Esophagus muscularis mucosa (tissue), 4 donors: ENCODE measurements at regions of chr3 and their contacts with region 1.

Region 1: DNA sequence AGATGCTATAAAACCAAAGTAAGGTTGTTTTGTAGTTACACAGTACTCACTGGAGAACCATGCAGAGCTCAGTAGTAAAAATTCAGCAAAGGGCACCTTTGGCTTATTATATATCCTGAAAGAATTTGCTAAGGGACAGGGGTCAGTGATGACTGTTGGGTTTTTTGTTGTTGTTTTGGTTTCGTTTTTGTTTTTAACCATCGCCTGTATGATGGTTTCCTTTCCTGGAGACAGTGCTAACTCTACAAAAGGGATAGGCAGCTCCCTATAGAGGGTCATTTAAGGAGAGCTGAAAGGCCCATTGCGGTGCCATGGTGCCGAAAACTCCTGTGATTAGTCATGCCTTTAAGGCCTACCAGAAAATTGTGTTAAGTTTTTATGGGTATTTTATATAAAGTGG is 118.2 kb upstream of the GOLIM4 start:
- DNase-seq: no peak
- H3K4me3 ChIP-seq: no peak overlapping the region
- H3K27ac ChIP-seq: no peak overlapping the region
- H3K4me1 ChIP-seq: peaks cover 0 to 7% (median 0%) of the 10 kb centered on the region in 4 donors
- H3K27me3 ChIP-seq: no peaks in the 10 kb centered on the region
- CTCF ChIP-seq: no peak
- EP300 ChIP-seq: no peak
- POLR2A ChIP-seq: no peak

Region 2: DNA sequence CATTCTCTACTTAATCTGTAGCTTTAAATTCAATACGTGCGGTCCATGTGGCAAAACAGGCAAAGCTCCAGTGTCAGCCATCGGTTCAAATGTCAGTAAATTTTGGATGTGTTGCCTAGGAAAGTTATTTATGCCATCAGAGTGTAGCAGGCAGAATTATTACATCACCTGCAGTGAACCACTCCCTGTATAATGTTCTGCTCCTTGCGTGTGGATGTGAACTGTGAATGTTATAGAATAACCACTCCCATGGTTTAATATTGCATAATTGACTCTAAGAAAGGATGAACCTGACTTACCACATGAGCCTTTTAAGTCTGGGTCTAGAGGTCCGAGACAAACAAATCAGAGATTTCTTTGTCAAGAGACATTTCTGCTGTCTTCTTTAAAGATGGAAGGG is 263.7 kb before region 1 on chr3:
- intact Hi-C with region 1: no loop called
- DNase-seq: no peak
- H3K4me3 ChIP-seq: no peak overlapping the region
- H3K27ac ChIP-seq: no peak overlapping the region
- H3K4me1 ChIP-seq: no peaks in the 10 kb centered on the region
- H3K27me3 ChIP-seq: no peaks in the 10 kb centered on the region
- CTCF ChIP-seq: no peak
- EP300 ChIP-seq: no peak
- POLR2A ChIP-seq: no peak

Region 3: DNA sequence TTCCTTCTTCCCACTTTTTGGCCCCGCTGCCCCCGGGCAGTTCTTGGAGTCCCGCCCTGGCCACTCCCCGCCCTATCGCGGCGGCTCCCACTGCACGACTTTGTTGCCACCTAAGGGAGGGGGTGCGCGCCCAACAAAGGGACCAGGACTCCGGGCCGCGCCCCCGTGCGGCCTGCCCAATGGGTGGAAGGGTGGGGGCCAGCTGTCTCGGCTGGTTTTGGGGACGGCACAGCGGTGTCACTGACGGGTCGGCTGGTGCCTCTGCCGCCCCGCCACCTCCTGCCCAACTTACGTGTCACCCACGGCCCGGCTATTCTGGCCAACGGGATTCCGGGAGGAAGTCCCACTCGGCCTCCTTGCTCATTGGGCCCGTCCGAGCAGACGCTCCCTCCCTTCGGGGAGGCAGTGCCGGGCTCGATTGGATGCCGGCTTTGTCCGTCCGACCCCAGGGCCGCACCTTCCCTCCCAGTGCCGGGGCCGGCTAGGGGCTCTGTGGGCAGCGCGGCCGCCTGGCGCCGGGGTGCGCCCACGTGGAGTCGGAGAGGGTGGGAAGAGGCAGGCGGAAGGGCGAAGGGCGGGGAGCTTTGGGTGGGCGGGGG is 118.2 kb before region 1 on chr3 and contains the start of gene GOLIM4:
- intact Hi-C with region 1: no loop called
- DNase-seq: peak; percentile 96
- H3K4me3 ChIP-seq: peak within 1 kb of the TSS; percentile 66 to 93 (median 91)
- H3K27ac ChIP-seq: peak within 1 kb of the TSS; percentile 92 to 98 (median 98)
- H3K4me1 ChIP-seq: peaks cover 38 to 48% (median 45%) of the 10 kb centered on the region in 4 donors
- H3K27me3 ChIP-seq: no peaks in the 10 kb centered on the region
- CTCF ChIP-seq: no peak
- EP300 ChIP-seq: no peak
- POLR2A ChIP-seq: peak; percentile 74
- total RNA-seq, gene GOLIM4: 41.7 to 46.5 (median 45.0) TPM

Region 4: DNA sequence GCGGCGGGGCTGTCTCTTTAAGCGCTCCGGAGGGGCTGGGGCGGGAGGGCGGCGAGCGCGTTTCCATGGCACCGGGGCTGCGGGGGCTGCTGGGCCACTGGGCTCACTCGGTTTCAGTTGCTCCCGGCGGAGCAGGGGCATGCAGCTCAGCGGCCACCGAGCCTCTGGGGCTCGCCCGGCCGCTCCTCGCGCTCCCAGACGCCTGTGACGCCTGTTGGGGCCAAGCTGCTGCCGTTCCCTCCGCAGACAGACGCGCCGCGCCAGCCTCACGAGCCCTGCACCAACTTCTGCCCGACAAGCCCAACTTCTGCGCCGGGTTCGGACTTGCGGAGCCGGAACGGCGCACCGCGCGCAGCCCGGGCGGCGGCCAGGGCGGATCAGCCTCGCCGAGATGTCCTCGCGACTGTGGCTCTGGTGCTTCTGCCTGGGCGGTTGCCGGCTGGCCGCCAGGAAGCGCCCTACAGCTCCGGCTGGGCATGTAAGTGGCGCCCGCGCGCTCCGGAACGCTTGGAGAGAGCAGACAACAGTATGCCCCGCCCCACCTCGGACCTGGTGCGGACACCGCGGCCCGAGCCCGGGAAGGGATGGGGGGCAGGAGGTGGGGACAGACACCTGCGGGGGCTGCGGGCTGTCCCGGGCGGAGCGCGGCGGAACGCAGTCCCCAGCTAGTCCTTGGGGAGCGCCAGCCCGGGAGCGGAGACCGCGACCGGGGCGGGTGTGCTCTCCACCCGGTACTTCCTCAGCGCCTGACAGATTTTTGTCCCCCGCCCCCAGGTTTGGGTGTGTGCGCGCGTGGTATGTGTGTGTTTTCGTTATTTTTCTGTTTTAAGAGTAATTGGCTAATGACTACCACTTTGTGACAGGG is 35.9 kb after region 1 on chr3:
- intact Hi-C with region 1: no loop called
- DNase-seq: no peak
- H3K4me3 ChIP-seq: peak overlapping the region; percentile 63 to 64 (median 64)
- H3K27ac ChIP-seq: peak overlapping the region; percentile 40 to 80 (median 56)
- H3K4me1 ChIP-seq: peaks cover 15 to 31% (median 26%) of the 10 kb centered on the region in 4 donors
- H3K27me3 ChIP-seq: peaks cover 0 to 50% (median 2%) of the 10 kb centered on the region in 4 donors
- CTCF ChIP-seq: peak in 2 of 3 experiments; percentile 10 to 33
- EP300 ChIP-seq: no peak
- POLR2A ChIP-seq: no peak

Region 5: DNA sequence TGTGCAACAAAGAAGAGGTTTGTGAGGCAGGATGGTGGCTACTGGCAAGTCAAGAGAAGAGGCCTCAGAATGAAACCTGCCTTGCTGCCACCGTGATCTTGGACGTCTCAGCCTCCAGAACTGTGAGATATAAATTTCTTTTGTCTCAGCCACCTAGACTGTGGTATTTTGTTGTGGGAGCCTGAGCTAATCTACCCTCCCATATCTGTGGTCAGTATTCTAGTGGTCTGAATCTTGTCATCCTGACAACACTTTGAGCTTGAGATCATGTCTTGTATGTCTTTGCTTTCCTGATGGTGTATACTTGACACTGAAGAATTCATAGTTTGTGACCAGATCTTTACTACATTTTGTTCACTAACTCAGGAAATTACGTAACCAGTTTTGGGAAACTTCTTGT is 122.4 kb after region 1 on chr3:
- intact Hi-C with region 1: no loop called
- DNase-seq: no peak
- H3K4me3 ChIP-seq: no peak overlapping the region
- H3K27ac ChIP-seq: no peak overlapping the region
- H3K4me1 ChIP-seq: peaks cover 3 to 13% (median 9%) of the 10 kb centered on the region in 4 donors
- H3K27me3 ChIP-seq: no peaks in the 10 kb centered on the region
- CTCF ChIP-seq: no peak
- EP300 ChIP-seq: no peak
- POLR2A ChIP-seq: no peak

Region 6: DNA sequence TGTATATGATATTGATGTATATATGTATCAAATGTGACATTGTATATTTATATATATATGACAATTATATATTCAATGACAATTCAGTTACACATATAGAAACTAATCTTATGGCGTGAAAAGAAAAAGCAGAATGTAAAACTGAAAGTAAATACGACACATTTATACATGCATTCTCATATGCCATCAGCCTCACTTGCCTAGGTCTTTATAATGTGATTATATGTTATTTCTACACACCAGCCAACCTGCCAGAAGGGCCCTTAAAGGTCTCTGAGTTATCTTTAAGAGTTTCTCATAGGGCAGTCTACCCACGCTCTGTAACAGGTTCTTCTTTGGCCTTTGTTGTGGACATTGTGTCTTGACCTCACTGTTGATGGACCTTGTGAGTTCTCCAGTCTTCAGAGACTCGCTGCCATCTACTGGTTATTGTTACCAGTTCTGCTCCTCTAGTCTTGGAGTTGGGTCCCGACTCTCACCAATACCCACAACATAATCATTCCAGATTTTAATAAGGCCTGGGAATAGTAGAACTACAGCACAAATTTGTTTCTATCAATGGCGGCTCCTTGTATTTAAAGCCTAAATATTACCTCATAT is 253.3 kb after region 1 on chr3:
- intact Hi-C with region 1: loop called (anchors 10 kb)
- DNase-seq: no peak
- H3K4me3 ChIP-seq: no peak overlapping the region
- H3K27ac ChIP-seq: no peak overlapping the region
- H3K4me1 ChIP-seq: no peaks in the 10 kb centered on the region
- H3K27me3 ChIP-seq: no peaks in the 10 kb centered on the region
- CTCF ChIP-seq: no peak
- EP300 ChIP-seq: no peak
- POLR2A ChIP-seq: no peak

Region 7: DNA sequence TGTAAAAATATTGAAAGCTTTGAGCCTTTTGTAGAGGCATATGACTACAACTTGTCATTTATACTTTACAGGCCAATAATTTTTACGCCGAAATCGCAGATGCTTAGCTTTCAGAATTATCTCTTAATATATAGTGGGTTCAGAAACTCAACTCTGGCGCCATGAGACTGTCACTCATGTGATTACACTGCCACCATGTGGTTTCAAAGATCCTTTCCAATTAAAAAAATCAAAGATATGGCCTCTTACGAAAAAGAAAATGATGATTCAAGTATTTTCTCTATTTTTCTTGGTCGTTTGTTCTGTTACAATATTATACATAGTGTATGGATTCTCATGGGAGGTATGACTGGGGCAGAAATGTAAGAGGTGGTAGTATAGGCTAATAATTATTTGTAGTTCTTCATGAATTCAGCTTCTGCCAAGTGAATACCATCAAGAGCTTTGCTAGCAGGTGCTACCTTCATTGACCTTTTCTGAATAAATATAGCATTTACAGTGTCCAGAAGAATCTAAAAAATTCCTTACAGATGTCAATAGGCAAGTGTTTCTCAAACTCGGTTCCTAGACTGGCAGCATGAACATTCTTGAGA is 633.5 kb after region 1 on chr3:
- intact Hi-C with region 1: loop called (anchors 2 kb)
- DNase-seq: no peak
- H3K4me3 ChIP-seq: no peak overlapping the region
- H3K27ac ChIP-seq: no peak overlapping the region
- H3K4me1 ChIP-seq: peaks cover 0 to 6% (median 0%) of the 10 kb centered on the region in 4 donors
- H3K27me3 ChIP-seq: no peaks in the 10 kb centered on the region
- CTCF ChIP-seq: peak; percentile 48 to 55 (median 52)
- EP300 ChIP-seq: no peak
- POLR2A ChIP-seq: no peak